ENCODE measurements at regions of chr22 and their contacts with region 1.

Region 1: DNA sequence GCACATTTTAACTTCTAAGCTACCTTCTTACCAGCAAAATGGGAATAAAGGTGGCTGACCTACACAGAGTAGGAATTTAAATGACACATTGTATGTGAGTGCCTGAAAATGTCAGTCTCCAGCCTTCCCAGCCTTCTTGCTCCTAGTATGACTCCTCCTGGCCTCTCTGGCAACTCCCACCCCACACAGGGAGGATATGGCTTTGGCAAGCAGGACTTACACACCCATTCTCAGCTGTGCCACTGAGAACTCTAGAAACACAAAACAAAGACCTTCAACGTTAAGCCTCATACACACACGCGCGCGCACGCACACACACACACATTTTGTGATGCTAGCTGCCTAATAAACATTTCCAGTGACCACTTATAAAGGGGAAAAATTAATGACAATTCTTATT is 65.8 kb downstream of the PACSIN2 start:
- DNase-seq: no peak
- CTCF ChIP-seq: no peak

Region 2: DNA sequence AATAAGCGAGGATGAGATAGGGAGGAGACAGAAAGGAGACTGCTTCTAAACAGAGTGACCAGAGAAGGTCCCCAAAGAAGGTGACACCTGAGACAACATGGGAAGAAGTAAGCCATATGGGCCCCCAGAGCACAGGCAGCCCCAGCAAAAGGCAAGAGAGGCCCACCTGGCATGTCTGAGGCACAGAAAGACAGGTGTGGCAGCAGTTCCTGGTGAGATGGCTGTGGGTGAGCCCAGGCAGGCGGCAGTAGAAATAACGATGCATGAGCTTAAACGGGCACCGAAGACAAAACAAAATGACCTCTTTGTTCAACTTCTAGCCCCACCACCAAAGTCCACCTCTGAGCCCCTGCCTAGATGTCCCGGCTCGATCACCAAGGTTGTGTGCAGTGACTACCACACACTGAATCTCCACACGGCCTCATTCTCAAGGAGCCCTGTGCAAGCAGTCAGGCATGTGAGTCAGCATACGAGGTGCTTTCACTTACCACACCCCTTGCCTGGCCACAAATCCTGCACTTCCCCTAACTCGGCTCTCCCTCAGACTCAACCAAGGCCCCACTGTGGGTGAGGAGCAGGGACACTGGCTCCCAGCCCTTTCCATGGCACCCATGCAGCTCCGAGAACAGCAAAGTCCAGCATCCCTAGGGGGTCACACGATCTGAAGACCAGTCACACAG is 11.9 kb before region 1 on chr22:
- CTCF ChIA-PET with region 1: interaction called, 11 read pairs
- POLR2A ChIA-PET with region 1: interaction called, 5 read pairs
- DNase-seq: peak; percentile 62
- CTCF ChIP-seq: no peak

Region 3: GRCh38 chr22:42993651-42994275 is 44.6 kb after region 1 on chr22:
- CTCF ChIA-PET with region 1: no interaction called
- POLR2A ChIA-PET with region 1: no interaction called
- DNase-seq: no peak
- CTCF ChIP-seq: no peak

Region 4: DNA sequence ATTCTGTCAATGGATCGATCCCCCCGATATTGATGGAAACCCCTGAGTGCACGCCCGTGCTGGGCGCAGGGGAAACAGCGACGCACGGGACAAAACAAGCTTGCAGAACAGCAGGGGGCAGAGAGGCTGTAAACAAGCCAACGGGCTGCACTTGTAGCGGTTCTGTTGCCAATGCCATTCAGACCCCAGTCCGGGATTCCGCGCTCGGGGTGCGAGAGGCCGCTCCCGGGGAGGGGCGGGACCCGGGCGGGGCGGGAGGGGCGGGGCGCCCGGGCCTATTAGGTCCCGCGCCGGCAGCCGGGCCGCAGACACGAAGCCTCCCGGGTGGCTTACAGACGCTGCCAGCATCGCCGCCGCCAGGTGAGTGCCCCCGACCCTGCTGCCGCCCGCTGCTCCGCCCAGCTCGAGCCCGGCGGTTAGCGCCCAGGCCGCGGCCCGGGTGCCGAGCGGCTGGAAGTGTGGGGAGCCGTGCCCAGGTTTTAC is 161.3 kb after region 1 on chr22 and contains the start of gene BIK:
- CTCF ChIA-PET with region 1: no interaction called
- POLR2A ChIA-PET with region 1: no interaction called
- DNase-seq: peak; percentile 58
- CTCF ChIP-seq: peak; percentile 45